HCT116 (cell line): ENCODE measurements at regions of chr14 and their contacts with region 1.

Region 1: GRCh38 chr14:101986953-101987352 is 22.6 kb downstream of the DYNC1H1 start:
- DNase-seq: no peak
- ATAC-seq: no peak
- H3K4me3 ChIP-seq: no peak overlapping the region
- H3K27ac ChIP-seq: no peak overlapping the region
- H3K4me1 ChIP-seq: no peaks in the 10 kb centered on the region
- H3K27me3 ChIP-seq: no peaks in the 10 kb centered on the region
- CTCF ChIP-seq: no peak
- POLR2A ChIP-seq: no peak
- RAD21 ChIP-seq: no peak

Region 2: DNA sequence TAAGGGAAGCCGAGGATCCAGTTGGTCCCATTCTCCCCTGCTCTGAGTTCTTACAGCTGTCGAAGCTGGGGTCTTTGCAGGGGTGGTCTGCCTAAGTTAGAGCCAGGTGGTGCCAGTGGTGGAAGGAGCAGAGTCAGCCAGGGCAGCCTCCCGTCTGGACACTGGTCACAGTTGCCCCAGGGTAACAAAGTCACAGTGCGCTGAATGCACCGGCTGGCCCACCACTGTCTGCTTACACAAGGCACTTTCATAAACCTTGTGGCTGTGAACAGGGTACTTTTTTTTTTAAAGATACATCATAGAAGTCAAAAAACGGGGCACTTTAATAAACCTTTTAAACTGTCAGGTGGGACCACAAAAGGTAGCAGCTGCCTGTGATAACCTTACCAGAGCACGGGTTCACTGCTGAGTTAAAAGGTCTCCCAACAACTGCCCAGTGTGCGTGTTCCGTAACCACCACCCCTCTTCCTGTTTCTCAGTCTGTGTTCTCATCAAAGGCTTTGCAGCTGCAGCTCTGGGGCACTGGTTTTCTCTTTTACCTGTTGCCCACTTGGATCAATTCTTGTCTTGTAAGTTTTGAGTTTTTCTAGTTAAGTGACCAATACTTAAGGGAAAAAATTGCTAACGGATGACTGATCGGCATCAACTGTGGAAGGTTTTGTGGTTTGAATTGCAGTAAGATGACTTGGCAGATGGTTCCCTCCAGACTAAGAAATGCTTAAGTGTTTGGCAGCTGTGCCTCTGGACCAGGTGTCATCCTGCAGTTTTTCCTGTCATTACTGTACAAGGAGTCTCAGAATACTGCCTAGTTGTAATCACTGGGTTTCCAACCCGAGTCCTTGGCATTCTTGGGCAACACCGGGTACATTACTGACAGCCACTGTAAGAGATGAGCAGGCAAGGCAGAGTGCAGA is 33.4 kb after region 1 on chr14:
- CTCF ChIA-PET with region 1: no interaction called
- POLR2A ChIA-PET with region 1: no interaction called
- RAD21 ChIA-PET with region 1: no interaction called
- intact Hi-C with region 1: loop called (anchors 5 kb)
- DNase-seq: no peak
- ATAC-seq: no peak
- H3K4me3 ChIP-seq: no peak overlapping the region
- H3K27ac ChIP-seq: no peak overlapping the region
- H3K4me1 ChIP-seq: no peaks in the 10 kb centered on the region
- H3K27me3 ChIP-seq: no peaks in the 10 kb centered on the region
- CTCF ChIP-seq: no peak
- POLR2A ChIP-seq: no peak
- RAD21 ChIP-seq: no peak

Region 3: DNA sequence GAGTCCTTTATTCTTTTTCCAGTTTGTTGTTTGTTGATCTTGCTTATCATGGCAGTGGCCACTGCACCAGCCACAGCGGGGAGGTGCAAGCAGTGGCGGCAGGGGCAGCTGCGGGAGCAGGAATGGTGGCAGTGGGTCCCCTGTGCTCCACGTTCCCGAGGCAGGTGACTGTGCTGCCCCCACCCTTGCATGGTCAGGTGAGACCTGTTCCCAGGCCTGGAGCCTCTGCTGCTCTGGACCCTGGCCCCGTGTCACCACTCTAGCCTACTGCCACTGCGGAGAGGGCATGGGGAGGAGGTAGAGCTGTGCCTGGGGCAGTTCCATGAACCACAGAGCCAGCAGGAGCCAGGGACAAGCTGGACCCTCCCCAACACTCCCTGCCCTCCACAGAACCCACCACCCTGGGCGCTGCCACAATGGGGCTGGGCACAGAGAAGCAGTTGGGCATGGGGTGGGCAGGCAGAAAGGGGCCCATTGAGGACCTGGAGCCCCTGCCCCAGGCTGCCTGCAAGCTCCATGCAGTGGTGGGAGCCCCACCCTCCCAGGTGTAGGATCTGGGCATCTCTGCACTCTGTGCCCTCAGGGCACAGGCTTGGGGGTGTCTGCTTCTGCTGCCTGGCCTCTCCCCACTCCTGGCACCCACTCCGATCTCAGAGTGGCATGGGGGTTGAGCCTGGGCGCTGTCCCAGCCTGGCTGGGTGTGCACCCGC is 129.6 kb after region 1 on chr14:
- CTCF ChIA-PET with region 1: no interaction called
- POLR2A ChIA-PET with region 1: no interaction called
- RAD21 ChIA-PET with region 1: no interaction called
- intact Hi-C with region 1: no loop called
- DNase-seq: no peak
- ATAC-seq: no peak
- H3K4me3 ChIP-seq: no peak overlapping the region
- H3K27ac ChIP-seq: no peak overlapping the region
- H3K4me1 ChIP-seq: no peaks in the 10 kb centered on the region
- H3K27me3 ChIP-seq: no peaks in the 10 kb centered on the region
- CTCF ChIP-seq: no peak
- POLR2A ChIP-seq: no peak
- RAD21 ChIP-seq: no peak